ENCODE measurements at regions of chr1 and their contacts with region 1.

Region 1: GRCh38 chr1:110281363-110282290 is 57.5 kb upstream of the RBM15 start:
- DNase-seq: peak in 1 of 4 experiments; percentile 21
- ATAC-seq: peak; percentile 62
- H3K4me3 ChIP-seq: no peak overlapping the region
- H3K27ac ChIP-seq: no peak overlapping the region
- H3K4me1 ChIP-seq: no peaks in the 10 kb centered on the region
- H3K27me3 ChIP-seq: peaks cover 29 to 59% of the 10 kb centered on the region in 2 experiments
- CTCF ChIP-seq: no peak
- EP300 ChIP-seq: no peak
- POLR2A ChIP-seq: no peak
- RAD21 ChIP-seq: no peak

Region 2: GRCh38 chr1:110292031-110292741 is 10.6 kb after region 1 on chr1:
- CTCF ChIA-PET with region 1: no interaction called
- POLR2A ChIA-PET with region 1: interaction called, 15 read pairs
- in situ Hi-C with region 1: no loop called
- intact Hi-C with region 1: no loop called
- DNase-seq: no peak
- ATAC-seq: peak; percentile 32; the same call in 1 of the 3 replicates
- H3K4me3 ChIP-seq: no peak overlapping the region
- H3K27ac ChIP-seq: no peak overlapping the region
- H3K4me1 ChIP-seq: no peaks in the 10 kb centered on the region
- H3K27me3 ChIP-seq: peaks cover 25 to 27% of the 10 kb centered on the region in 2 experiments
- CTCF ChIP-seq: no peak
- EP300 ChIP-seq: no peak
- POLR2A ChIP-seq: no peak
- RAD21 ChIP-seq: no peak

Region 3: GRCh38 chr1:110464330-110464729 is 182.7 kb after region 1 on chr1:
- CTCF ChIA-PET with region 1: no interaction called
- POLR2A ChIA-PET with region 1: no interaction called
- in situ Hi-C with region 1: no loop called
- intact Hi-C with region 1: no loop called
- DNase-seq: no peak
- ATAC-seq: no peak
- H3K4me3 ChIP-seq: no peak overlapping the region
- H3K27ac ChIP-seq: no peak overlapping the region
- H3K4me1 ChIP-seq: peaks cover 4 to 7% of the 10 kb centered on the region in 2 experiments; a peak in 3 of 5 replicates
- H3K27me3 ChIP-seq: no peaks in the 10 kb centered on the region; a peak in 1 of 5 replicates
- CTCF ChIP-seq: no peak
- EP300 ChIP-seq: no peak
- POLR2A ChIP-seq: no peak
- RAD21 ChIP-seq: no peak

Region 4: DNA sequence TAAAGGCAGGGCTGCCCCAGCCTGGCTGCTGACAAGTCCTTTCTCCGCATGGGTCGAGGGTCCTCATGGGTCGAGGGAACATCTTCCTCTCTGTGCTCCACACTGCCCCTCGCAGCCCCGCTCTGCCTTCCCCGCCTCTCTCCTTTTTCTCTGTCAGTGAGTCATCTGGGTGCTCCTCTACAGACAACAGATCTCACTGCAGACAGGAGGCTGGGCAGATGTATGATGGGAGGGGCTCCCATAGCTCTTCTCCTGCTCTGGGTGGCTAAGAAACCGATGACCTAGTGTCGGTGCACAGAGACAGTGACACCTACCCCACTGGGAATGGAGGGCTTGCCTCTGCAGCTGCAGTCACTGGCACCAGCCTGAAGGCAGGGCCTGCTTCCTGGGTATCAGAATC is 231.9 kb after region 1 on chr1:
- CTCF ChIA-PET with region 1: no interaction called
- POLR2A ChIA-PET with region 1: no interaction called
- in situ Hi-C with region 1: no loop called
- intact Hi-C with region 1: no loop called
- DNase-seq: peak in 2 of 4 experiments; percentile 18 to 39
- ATAC-seq: peak; percentile 82
- H3K4me3 ChIP-seq: no peak overlapping the region
- H3K27ac ChIP-seq: no peak overlapping the region
- H3K4me1 ChIP-seq: no peaks in the 10 kb centered on the region
- H3K27me3 ChIP-seq: peaks cover 4 to 46% of the 10 kb centered on the region in 2 experiments
- CTCF ChIP-seq: no peak
- EP300 ChIP-seq: no peak
- POLR2A ChIP-seq: no peak
- RAD21 ChIP-seq: no peak

Measured in K562 (cell line).